ENCODE measurements at regions of chr11 and their contacts with region 1.

Region 1: DNA sequence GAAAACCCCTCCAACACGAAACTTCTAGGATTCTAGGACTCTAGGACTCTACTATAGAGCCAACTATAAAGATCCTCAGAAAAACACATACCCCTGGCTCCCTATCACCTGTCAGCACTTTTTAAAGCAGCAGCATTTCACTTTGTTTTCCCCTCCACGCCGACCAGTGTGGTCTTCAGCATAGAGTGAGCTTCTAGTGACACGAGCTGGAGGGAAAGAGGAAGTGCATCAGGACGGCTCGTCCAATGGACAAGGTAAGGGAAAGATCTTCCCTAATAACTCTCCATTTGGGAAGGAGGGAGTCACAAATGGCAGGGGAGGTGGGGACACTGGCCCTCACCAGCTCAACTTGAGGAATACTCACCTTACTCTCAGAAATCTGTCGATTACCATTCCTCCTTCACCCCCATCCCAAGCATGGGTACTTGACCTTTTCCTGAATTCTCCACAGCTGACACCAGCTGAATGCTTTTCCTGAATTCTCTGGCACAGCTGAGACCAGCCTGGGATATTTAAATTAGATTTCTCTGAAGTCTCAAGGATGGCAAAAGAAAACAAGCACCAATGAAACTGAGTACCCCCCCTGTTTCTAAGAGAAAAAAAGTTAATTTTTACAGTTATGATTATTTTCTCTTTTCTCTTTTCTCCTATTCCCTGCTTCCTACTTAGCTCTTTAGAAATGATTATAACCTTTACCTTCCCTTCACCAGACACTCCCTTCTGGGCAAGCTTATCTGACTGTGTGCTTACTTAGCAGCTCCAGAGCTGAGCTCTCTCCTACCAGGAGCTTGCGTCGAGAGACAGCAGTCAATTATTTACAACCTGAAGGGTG is 33.3 kb upstream of the NNMT start:
- DNase-seq: peak; percentile 55
- H3K4me3 ChIP-seq: no peak overlapping the region
- H3K27ac ChIP-seq: no peak overlapping the region
- H3K4me1 ChIP-seq: no peaks in the 10 kb centered on the region
- H3K27me3 ChIP-seq: peaks cover 9 to 14% of the 10 kb centered on the region in 2 experiments
- CTCF ChIP-seq: peak; percentile 72 to 73
- POLR2A ChIP-seq: no peak

Region 2: DNA sequence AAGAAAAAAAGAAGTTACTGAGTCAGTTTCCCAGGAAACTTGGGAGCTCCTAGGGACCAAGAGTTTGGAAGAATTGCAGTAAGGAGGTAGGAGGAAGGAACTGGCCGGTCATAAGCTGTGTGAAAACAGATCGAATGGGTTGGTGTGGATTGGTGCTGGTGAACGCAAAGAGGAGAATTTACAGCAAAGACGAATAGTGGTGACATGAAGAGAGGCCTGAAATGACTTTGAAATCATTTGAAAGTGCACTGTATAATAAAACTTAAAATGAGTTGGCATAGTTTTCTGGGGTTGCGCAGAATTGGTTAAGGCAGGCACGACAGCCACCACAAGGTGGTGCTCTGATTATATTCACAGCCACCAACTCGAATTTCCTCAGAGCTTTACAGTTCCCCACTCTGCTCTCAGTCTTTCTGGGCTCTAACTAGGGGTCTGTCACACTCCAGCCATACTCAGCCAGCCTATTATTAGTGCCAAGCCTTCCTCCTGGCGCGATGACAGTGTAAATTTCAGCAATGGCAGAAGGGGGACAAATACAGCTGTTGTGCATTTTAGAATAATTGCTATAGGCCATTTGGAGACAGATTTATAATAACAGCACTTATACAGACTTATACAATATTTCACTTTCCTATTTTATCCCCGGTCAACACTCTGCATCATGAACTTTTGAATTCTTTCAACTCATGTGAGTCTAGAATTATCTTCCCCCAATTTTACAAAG is 366.6 kb before region 1 on chr11:
- CTCF ChIA-PET with region 1: interaction called, 425 read pairs
- POLR2A ChIA-PET with region 1: no interaction called
- dilution Hi-C with region 1: no loop called
- intact Hi-C with region 1: loop called (anchors 1 kb)
- DNase-seq: peak; percentile 34
- H3K4me3 ChIP-seq: no peak overlapping the region
- H3K27ac ChIP-seq: no peak overlapping the region
- H3K4me1 ChIP-seq: no peaks in the 10 kb centered on the region
- H3K27me3 ChIP-seq: peaks cover 3 to 4% of the 10 kb centered on the region in 2 experiments
- CTCF ChIP-seq: peak; percentile 72 to 76
- POLR2A ChIP-seq: no peak

Region 3: DNA sequence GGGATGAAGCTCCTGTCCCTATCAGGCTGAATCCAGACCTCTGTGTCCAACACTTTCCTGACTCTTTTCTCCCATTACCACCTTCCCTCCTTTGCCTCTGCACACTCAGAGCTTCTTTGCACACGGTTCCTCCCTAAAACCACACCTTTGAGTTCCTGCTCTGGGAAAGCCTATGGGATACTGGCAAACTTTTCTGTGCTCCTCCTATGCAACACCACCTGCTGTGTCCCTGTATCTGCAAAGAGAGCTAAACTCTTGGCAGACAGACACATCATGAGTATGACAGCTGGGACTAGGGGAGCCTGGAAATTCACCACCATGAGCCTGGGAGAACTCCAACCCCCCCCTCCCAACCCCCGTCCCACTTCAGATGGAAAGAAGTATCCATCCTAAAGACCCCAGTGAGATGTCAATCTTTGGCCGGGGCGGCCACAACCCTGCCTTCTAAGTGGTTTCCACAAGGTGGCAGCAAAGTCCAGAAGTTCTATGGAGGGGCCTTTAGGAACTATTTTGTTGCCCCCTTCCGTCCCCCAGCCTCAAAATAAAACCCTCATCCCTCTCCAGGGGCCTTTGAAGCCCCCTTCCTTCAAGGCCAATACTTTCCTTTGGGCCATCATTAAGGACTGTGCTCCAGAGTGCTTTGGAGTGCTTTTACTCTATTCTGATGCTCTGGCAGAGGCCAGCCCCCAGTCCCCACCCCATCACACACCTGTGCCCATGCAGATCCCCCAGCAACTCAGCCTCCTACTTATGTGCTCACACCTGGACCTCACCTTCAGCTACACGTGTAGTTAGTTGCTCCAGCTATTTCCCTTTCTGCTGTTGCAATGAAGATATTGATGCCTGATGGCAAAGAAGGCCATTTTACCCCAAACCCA is 268.6 kb before region 1 on chr11:
- CTCF ChIA-PET with region 1: interaction called, 539 read pairs
- POLR2A ChIA-PET with region 1: no interaction called
- dilution Hi-C with region 1: no loop called
- intact Hi-C with region 1: loop called (anchors 1 kb)
- DNase-seq: peak; percentile 11
- H3K4me3 ChIP-seq: no peak overlapping the region
- H3K27ac ChIP-seq: no peak overlapping the region
- H3K4me1 ChIP-seq: no peaks in the 10 kb centered on the region
- H3K27me3 ChIP-seq: peaks cover 2 to 4% of the 10 kb centered on the region in 2 experiments
- CTCF ChIP-seq: peak; percentile 50 to 69
- POLR2A ChIP-seq: no peak

Region 4: DNA sequence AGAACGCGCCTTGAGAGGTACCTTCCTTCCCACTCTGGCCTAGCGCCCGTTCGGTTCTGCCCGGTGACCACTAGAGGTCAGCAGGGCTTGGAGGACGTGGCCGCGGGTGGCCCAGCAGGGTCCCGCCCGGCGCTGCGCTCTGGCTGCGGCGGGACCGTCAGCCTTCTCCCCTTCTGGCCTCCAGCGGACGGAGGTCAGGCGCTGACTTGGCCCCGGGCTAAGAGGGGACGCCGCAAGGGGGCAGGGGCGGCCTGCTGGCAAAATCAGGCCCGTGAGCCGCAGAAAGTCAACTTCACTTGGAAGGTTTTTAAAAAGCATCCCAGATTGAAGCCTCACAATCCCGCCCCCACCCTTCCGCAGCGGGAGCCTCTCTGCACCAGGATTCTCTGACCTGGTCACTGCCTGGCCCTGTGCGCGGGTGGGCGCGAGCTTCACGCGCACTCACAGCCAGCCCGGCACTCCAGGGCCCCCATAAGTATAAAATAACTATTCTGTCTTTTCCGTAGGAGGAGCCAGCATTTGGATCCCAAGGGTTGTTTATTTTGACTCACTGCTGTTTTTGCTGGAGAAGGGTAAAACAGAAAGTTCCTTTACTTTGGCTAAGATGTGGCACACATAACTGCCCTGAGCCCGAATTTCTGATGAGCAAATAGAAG is 226.6 kb before region 1 on chr11:
- CTCF ChIA-PET with region 1: interaction called, 236 read pairs
- POLR2A ChIA-PET with region 1: no interaction called
- dilution Hi-C with region 1: loop called (anchors 25 kb)
- intact Hi-C with region 1: loop called (anchors 1 kb)
- DNase-seq: peak; percentile 73
- H3K4me3 ChIP-seq: peak overlapping the region; percentile 30 to 46 (median 45)
- H3K27ac ChIP-seq: peak overlapping the region; percentile 56
- H3K4me1 ChIP-seq: peaks cover 15% of the 10 kb centered on the region
- H3K27me3 ChIP-seq: peaks cover 0 to 1% of the 10 kb centered on the region in 2 experiments
- CTCF ChIP-seq: peak; percentile 91 to 93
- POLR2A ChIP-seq: no peak

Region 5: GRCh38 chr11:114135737-114136151 is 127.2 kb before region 1 on chr11:
- CTCF ChIA-PET with region 1: interaction called, 10 read pairs
- POLR2A ChIA-PET with region 1: no interaction called
- dilution Hi-C with region 1: no loop called
- intact Hi-C with region 1: no loop called
- DNase-seq: no peak
- H3K4me3 ChIP-seq: no peak overlapping the region
- H3K27ac ChIP-seq: no peak overlapping the region
- H3K4me1 ChIP-seq: peaks cover 42% of the 10 kb centered on the region
- H3K27me3 ChIP-seq: no peaks in the 10 kb centered on the region
- CTCF ChIP-seq: no peak
- POLR2A ChIP-seq: no peak

Region 6: DNA sequence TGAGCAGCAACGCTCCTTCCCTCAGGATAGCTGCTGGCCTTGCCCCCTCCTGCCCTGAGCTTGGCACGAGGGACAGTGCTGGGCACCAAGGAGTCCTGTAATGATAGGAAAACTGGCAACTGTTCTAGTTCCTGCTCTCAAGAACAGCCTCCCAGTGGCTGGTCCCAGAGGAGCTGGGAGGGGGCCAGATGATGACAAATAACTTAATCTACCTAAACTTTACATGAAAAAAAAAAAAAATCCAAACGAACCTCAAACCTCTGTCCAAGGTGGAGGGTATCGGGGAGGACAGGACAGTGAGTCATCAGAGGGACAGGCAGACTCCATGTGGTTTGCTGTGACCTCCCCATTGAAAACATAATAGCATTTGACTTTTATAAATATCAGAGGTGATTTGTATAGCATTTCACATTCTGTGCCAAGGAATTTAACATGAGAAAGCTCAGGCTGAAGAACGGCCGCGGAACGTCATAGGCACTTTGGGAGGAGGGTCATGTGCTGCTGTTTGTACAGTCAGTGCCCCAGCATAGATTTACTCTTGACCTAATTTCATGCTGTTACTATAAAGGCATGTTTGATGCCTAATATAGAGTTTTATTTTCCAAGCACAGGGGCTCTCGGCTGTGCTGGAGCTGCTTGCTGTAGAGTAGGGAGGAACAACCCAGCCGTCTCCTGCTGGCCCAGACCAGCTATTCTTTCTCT is 64.9 kb before region 1 on chr11:
- CTCF ChIA-PET with region 1: interaction called, 31 read pairs
- POLR2A ChIA-PET with region 1: no interaction called
- dilution Hi-C with region 1: no loop called
- intact Hi-C with region 1: loop called (anchors 2 kb)
- DNase-seq: peak; percentile 96
- H3K4me3 ChIP-seq: no peak overlapping the region
- H3K27ac ChIP-seq: peak overlapping the region; percentile 83
- H3K4me1 ChIP-seq: peaks cover 26% of the 10 kb centered on the region
- H3K27me3 ChIP-seq: no peaks in the 10 kb centered on the region
- CTCF ChIP-seq: no peak
- POLR2A ChIP-seq: peak; percentile 21

Region 7: DNA sequence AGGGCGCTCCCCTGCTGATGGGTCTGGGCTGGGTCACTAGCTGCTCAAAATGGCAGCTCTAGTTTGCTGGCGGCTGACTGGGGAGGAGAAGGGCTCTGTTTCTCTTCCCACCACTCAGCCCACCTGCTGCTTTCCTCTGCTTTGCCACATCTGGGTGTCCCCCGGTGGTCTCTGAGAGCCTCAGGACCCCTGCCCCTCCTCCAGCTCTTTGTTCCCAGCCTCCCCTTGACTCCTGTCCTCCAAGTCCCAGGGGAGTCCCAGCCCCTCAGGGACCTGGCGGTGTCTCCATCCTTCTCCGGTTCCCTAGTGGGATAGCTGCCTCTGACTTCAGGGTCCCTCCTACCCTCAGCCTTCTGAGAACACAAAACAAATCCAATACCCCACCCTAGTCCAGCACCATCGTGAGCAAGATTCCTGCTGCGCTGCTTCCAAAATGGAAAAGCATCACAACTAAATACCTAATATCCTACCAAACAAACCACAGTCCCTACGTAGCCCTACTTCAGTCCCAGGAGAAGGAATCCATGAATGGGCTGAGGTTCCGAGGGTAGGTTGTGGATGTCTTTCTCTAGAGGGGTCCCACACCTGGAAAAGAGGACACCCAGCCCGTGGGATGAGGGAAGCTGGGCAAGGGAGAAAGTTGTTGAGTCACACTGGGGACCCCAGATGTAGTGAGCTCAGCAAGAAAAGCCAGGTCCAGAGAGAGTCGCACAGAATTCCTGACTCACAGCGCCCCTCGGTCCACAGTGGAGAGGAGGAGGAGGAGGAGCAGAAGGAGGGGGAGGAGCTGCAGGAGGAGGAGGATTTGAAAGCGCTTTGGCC is 11.7 kb before region 1 on chr11:
- CTCF ChIA-PET with region 1: interaction called, 51 read pairs
- POLR2A ChIA-PET with region 1: no interaction called
- dilution Hi-C with region 1: no loop called
- intact Hi-C with region 1: no loop called
- DNase-seq: no peak
- H3K4me3 ChIP-seq: no peak overlapping the region
- H3K27ac ChIP-seq: no peak overlapping the region
- H3K4me1 ChIP-seq: no peaks in the 10 kb centered on the region
- H3K27me3 ChIP-seq: no peaks in the 10 kb centered on the region
- CTCF ChIP-seq: no peak
- POLR2A ChIP-seq: no peak